ENCODE measurements at regions of chr6 and their contacts with region 1.

Region 1: GRCh38 chr6:112180095-112180820 is 74.1 kb downstream of the LAMA4 start:
- H3K4me3 Mint-ChIP-seq: no peak overlapping the region
- H3K27ac Mint-ChIP-seq: no peak overlapping the region
- H3K4me1 Mint-ChIP-seq: no peaks in the 10 kb centered on the region
- H3K27me3 Mint-ChIP-seq: peaks cover 8% of the 10 kb centered on the region

Region 2: DNA sequence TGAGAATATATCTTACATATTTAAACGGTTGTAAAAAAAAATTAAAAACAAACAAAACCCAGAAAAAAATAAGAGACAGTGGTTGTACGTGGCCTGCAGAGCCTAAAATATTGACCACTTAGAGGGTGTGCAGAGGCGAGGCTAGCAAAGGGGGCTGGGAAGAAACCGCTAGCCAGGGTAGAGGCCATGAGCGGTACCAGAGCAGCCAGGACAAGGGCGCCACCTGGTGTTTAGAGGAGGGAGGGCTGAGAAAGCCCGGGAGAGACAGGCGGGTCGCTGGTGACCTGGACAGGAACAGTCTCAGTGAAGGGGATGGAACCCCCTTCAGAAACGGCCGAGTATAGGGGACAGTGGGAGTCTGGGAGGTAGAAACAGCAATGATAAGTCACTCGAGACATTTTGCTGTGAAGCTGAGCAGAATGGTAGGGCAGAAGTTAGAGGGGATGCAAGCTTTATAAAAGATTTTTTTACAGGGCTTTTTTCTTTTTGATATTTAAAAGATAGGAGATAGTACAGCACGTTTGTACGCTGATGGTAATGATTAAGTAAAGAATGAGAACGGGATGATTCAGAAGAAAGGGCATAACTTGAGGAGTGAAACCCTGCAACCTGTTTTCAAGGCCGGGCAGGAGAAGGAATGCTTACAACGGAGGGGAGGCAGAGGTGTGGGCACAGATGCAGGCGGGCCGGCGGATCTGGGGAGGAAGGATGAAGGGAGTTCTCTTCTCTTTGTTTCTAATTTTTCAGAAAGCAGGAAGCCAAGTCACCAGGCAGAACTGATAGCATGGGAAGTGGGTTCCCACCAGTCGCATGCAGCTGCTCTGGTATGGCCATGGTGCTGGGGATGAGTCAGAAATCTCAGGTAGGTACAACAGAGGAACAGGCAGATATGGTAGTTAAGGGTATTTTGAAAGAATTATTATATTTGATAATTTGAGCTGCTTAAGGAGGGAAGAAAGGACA is 16.7 kb before region 1 on chr6:
- intact Hi-C with region 1: no loop called
- H3K4me3 Mint-ChIP-seq: no peak overlapping the region
- H3K27ac Mint-ChIP-seq: no peak overlapping the region
- H3K4me1 Mint-ChIP-seq: peaks cover 6% of the 10 kb centered on the region
- H3K27me3 Mint-ChIP-seq: peaks cover 27% of the 10 kb centered on the region

Region 3: GRCh38 chr6:112291161-112291778 is 111.0 kb after region 1 on chr6:
- intact Hi-C with region 1: loop called (anchors 5 kb)
- H3K4me3 Mint-ChIP-seq: no peak overlapping the region
- H3K27ac Mint-ChIP-seq: no peak overlapping the region
- H3K4me1 Mint-ChIP-seq: no peaks in the 10 kb centered on the region
- H3K27me3 Mint-ChIP-seq: peaks cover 5% of the 10 kb centered on the region

Region 4: GRCh38 chr6:112311950-112312547 is 131.8 kb after region 1 on chr6:
- intact Hi-C with region 1: loop called (anchors 1 kb)
- H3K4me3 Mint-ChIP-seq: no peak overlapping the region
- H3K27ac Mint-ChIP-seq: no peak overlapping the region
- H3K4me1 Mint-ChIP-seq: peaks cover 5% of the 10 kb centered on the region
- H3K27me3 Mint-ChIP-seq: no peaks in the 10 kb centered on the region

Region 5: GRCh38 chr6:113414511-113414910 is 1234.3 kb after region 1 on chr6:
- intact Hi-C with region 1: no loop called
- H3K4me3 Mint-ChIP-seq: no peak overlapping the region
- H3K27ac Mint-ChIP-seq: no peak overlapping the region
- H3K4me1 Mint-ChIP-seq: peaks cover 13% of the 10 kb centered on the region
- H3K27me3 Mint-ChIP-seq: no peaks in the 10 kb centered on the region

Region 6: DNA sequence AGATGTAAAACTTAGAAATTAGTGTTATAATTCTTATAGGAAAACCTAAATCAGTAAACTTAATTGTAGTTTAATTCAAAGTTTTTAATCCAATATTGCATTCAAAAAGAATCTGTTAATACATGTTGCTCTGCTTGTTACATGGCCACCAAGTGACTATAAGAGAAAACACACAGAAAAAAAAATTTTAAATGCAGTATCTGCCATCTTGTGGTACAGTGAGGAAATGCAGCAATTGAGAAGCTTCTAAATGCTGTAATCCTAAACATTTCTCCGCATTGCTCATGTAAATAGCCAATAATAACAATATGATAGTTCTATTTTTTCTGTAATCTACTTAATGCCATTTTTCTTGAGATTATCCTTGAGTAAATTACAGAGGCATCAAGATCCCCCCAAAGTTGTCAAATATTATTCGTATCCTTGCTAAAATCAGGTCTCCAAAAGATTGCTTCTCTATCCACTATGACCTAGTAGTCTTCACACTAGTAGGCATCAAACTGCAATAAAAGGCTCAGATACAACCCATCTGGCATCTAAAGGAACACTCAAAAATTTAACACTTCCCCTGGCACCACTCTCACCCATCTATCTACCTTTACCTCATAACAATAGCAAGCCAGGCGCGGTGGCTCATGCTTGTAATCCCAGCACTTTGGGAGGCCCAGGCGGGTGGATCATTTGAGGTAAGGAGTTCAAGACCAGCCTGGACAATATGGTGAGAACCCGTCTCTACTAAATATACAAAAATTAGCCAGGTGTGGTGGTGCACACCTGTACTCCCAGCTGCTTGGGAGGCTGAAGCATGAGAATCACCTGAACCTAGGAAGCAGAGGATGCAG is 1756.1 kb after region 1 on chr6:
- intact Hi-C with region 1: loop called (anchors 10 kb)
- H3K4me3 Mint-ChIP-seq: no peak overlapping the region
- H3K27ac Mint-ChIP-seq: no peak overlapping the region
- H3K4me1 Mint-ChIP-seq: no peaks in the 10 kb centered on the region
- H3K27me3 Mint-ChIP-seq: no peaks in the 10 kb centered on the region

Measured in dendritic cell treated with granulocyte-macrophage colony-stimulating factor and Interleukin-4, amounts not matched to agents 40 ng/mL and 50 ng/mL, for 4 days (primary cell).